BJ (cell line): ENCODE measurements at regions of chr2 and their contacts with region 1.

Region 1: GRCh38 chr2:10408649-10409579 is 39.2 kb downstream of the ODC1 start:
- DNase-seq: no peak
- H3K4me3 ChIP-seq: no peak overlapping the region
- H3K27me3 ChIP-seq: no peaks in the 10 kb centered on the region
- CTCF ChIP-seq: peak; percentile 98

Region 2: DNA sequence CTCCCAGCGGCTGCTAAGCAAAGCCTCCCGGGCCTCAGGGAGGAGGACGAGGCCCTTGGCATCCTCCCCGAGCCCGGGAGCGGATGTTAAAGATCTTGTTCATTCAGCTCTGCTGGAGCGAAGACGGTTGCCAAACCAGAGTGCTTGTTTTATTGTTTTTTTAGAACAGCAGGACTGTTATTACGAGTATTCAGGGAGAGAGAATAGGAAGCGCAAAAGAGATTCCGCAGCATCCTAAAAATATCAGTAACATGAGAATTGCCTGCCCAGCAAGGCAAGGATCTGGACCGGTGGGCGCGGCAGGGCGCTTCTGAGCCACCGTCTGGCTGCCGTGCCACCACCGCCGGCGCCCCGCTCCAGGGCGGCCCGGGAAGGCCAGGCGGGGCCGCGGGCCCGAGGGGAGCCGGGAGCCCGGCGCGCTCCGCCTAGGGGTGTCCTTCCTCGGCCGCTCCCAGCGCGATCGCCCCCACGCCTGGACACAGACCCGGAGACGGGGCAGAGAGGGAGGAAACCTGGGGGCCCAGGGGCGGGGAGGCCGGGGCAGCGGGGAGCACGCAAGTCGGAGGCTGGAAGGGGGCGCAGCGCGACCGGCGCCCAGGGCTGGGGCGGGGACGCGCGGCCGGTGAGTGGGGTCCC is 329.6 kb before region 1 on chr2:
- CTCF ChIA-PET with region 1: interaction called, 11 read pairs
- POLR2A ChIA-PET with region 1: no interaction called
- DNase-seq: peak; percentile 27
- H3K4me3 ChIP-seq: peak overlapping the region; percentile 44
- H3K27me3 ChIP-seq: peaks cover 14% of the 10 kb centered on the region
- CTCF ChIP-seq: no peak

Region 3: GRCh38 chr2:10141736-10142642 is 266.9 kb before region 1 on chr2:
- CTCF ChIA-PET with region 1: interaction called, 27 read pairs
- POLR2A ChIA-PET with region 1: no interaction called
- DNase-seq: no peak
- H3K4me3 ChIP-seq: no peak overlapping the region
- H3K27me3 ChIP-seq: no peaks in the 10 kb centered on the region
- CTCF ChIP-seq: peak; percentile 56

Region 4: GRCh38 chr2:10302479-10303180 is 106.3 kb before region 1 on chr2 and contains the start of gene HPCAL1:
- CTCF ChIA-PET with region 1: interaction called, 26 read pairs
- POLR2A ChIA-PET with region 1: no interaction called
- DNase-seq: no peak
- H3K4me3 ChIP-seq: peak within 1 kb of the TSS; percentile 60
- H3K27me3 ChIP-seq: no peaks in the 10 kb centered on the region
- CTCF ChIP-seq: peak; percentile 57
- polyA plus RNA-seq, gene HPCAL1: 8.1 and 17.6 TPM in 2 replicates

Region 5: GRCh38 chr2:10389573-10389972 is 19.3 kb before region 1 on chr2:
- CTCF ChIA-PET with region 1: interaction called, 24 read pairs
- POLR2A ChIA-PET with region 1: no interaction called
- DNase-seq: peak; percentile 46
- H3K4me3 ChIP-seq: no peak overlapping the region
- H3K27me3 ChIP-seq: no peaks in the 10 kb centered on the region
- CTCF ChIP-seq: no peak

Region 6: DNA sequence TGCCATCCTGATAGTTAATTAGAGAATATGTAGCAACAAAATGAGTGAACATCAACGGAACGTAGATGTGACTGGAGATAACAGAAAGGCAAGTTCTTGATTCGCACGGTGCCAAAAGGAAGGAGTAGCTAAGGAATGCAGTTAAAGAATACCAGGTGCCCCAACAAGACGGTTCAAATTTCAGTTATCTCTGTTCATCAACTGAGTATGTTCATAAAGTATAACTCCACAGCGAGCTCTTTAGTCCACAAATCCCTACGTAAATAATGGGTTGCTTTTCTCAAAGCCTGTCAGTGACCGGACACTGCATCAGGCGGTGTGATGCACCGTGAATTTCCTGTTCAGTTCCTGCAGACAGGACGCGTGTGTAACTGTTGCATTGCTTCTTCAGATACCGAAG is 189.0 kb after region 1 on chr2:
- CTCF ChIA-PET with region 1: no interaction called
- POLR2A ChIA-PET with region 1: no interaction called
- DNase-seq: no peak
- H3K4me3 ChIP-seq: no peak overlapping the region
- H3K27me3 ChIP-seq: no peaks in the 10 kb centered on the region
- CTCF ChIP-seq: no peak